ENCODE measurements at regions of chr10 and their contacts with region 1.

Region 1: GRCh38 chr10:124741281-124741921 is 2.8 kb downstream of the FAM53B start:
- DNase-seq: peak; percentile 82 to 90
- ATAC-seq: peak; percentile 42 to 54
- H3K4me3 ChIP-seq: peak overlapping the region; percentile 69 to 88 (median 78)
- H3K27ac ChIP-seq: peak overlapping the region; percentile 92 to 97 (median 92)
- H3K4me1 ChIP-seq: peaks cover 73 to 76% of the 10 kb centered on the region in 2 donors
- H3K27me3 ChIP-seq: no peaks in the 10 kb centered on the region
- CTCF ChIP-seq: peak; percentile 87 to 98 (median 96)
- POLR2A ChIP-seq: peak; percentile 31 to 47

Region 2: DNA sequence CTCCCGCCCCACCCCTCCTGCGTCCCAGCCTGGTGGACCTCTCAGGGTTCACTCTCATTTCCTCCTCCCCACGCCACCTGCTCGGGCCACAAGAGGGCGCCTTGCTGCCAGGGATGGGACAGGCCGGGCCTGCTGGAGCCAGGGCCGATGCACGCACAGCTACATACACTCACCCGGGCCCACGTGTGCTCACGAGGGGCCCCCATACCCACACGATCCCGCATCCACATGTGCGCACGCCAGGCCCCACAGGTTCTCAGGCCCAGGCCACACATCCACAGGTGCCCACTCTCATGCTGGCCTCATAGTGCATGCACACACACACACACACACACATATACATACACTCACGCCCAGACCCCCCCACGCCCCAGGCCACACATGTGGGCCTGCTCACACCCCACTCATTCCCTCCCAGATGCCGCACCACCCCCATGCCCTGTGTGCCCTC is 211.2 kb before region 1 on chr10:
- in situ Hi-C with region 1: loop called in 2 of 4 experiments (anchors 5 to 25 kb)
- intact Hi-C with region 1: loop called (anchors 2 kb)
- DNase-seq: peak; percentile 69 to 84
- ATAC-seq: peak; percentile 69
- H3K4me3 ChIP-seq: no peak overlapping the region
- H3K27ac ChIP-seq: no peak overlapping the region
- H3K4me1 ChIP-seq: peaks cover 9 to 11% of the 10 kb centered on the region in 2 donors
- H3K27me3 ChIP-seq: no peaks in the 10 kb centered on the region
- CTCF ChIP-seq: peak; percentile 83 to 93 (median 89)
- POLR2A ChIP-seq: no peak

Region 3: GRCh38 chr10:124560377-124561105 is 180.9 kb before region 1 on chr10:
- in situ Hi-C with region 1: no loop called
- intact Hi-C with region 1: loop called (anchors 2 kb)
- DNase-seq: peak; percentile 87 to 93
- ATAC-seq: peak; percentile 85 to 93
- H3K4me3 ChIP-seq: peak overlapping the region in 2 of 4 donors; percentile 18 to 25
- H3K27ac ChIP-seq: peak overlapping the region; percentile 94 to 99 (median 95)
- H3K4me1 ChIP-seq: peaks cover 50 to 68% of the 10 kb centered on the region in 2 donors
- H3K27me3 ChIP-seq: no peaks in the 10 kb centered on the region
- CTCF ChIP-seq: no peak
- POLR2A ChIP-seq: peak; percentile 29 to 68

Region 4: DNA sequence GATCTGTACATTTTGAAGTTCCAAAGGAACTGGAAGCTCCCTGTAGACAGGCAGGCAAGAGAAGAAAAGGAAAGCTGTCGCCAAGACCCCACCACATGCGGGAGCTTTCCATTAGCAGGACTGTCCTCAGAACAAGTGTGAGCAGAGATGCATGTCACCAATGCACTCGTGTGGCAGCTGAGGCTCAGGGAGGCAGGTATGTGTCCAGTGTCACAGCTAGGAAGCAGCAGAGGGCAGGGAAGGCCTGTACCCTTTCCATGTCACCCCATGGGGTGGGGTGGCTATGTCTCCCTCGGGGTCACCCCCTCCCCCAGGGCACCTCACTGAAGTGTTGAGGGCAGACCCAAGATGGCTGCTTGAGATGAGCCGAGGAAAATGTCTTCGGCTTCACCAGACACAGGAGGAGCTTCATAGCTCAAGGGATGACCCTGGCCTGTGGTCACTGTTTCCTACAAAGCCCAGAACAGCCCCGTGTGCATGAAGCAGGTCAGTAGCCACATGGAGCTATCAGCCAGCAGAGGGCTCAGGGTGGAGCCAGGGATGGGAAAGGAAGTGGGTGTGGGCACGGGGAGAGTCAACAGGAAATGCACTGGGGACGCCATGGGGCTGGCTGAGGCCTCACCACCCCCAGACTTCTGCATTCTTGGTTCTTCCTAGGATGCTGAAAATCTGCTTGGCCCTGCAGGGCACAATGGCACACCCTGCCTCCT is 93.8 kb before region 1 on chr10:
- in situ Hi-C with region 1: loop called in 2 of 4 experiments (anchors 25 kb)
- intact Hi-C with region 1: loop called (anchors 5 kb)
- DNase-seq: peak; percentile 51 to 68
- ATAC-seq: peak in 1 of 2 donors; percentile 13
- H3K4me3 ChIP-seq: no peak overlapping the region
- H3K27ac ChIP-seq: peak overlapping the region; percentile 76 to 85 (median 82)
- H3K4me1 ChIP-seq: peaks cover 76 to 85% of the 10 kb centered on the region in 2 donors
- H3K27me3 ChIP-seq: no peaks in the 10 kb centered on the region
- CTCF ChIP-seq: peak in 2 of 5 experiments; percentile 9
- POLR2A ChIP-seq: no peak

Region 5: DNA sequence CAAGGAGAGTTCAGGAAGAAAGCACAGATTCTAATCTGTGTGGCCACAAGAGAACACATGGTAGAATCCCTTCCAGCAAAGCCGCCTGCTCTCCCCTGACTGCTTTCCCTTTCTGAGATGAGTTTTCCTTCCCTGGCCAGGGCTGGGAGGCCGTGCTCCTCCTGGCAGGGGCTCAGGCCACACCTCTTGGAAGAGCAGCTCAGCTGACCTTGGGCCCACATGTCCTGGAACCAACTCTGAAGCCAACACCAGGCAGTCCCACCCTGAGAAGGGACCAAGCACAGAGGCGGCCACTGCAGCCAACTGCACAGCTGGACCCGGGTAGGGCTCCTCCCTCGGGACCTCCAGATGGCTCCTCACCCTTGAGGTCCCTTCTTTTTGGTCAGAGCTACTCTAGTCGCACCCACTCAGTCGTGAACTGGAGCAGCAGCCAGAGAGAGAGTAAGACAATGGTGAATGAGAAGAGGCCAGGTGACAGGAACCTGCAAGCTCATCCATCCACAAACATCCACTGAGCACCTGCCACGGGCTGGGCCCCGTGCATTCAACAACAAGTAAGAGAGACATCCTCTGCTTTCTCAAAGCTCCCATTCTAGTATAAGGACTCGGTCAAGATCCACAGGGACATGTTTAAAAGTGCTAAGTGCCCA is 37.5 kb before region 1 on chr10:
- in situ Hi-C with region 1: no loop called
- intact Hi-C with region 1: loop called (anchors 1 kb)
- DNase-seq: peak; percentile 89 to 95
- ATAC-seq: peak; percentile 35 to 52
- H3K4me3 ChIP-seq: peak overlapping the region in 3 of 4 donors; percentile 3 to 28 (median 5)
- H3K27ac ChIP-seq: peak overlapping the region; percentile 93 to 98 (median 96)
- H3K4me1 ChIP-seq: peaks cover 100% of the 10 kb centered on the region in 2 donors
- H3K27me3 ChIP-seq: no peaks in the 10 kb centered on the region
- CTCF ChIP-seq: no peak
- POLR2A ChIP-seq: peak; percentile 73 to 74

Region 6: GRCh38 chr10:124916585-124917427 is 175.4 kb after region 1 on chr10:
- in situ Hi-C with region 1: no loop called
- intact Hi-C with region 1: loop called (anchors 2 kb)
- DNase-seq: peak; percentile 98
- ATAC-seq: peak; percentile 66 to 67
- H3K4me3 ChIP-seq: peak overlapping the region; percentile 76 to 90 (median 80)
- H3K27ac ChIP-seq: peak overlapping the region; percentile 96 to 99 (median 98)
- H3K4me1 ChIP-seq: peaks cover 46 to 55% of the 10 kb centered on the region in 2 donors
- H3K27me3 ChIP-seq: no peaks in the 10 kb centered on the region
- CTCF ChIP-seq: peak in 1 of 5 experiments; percentile 8
- POLR2A ChIP-seq: peak; percentile 99

Measured in gastrocnemius medialis (tissue), 4 donors.